ENCODE measurements at regions of chr2 and their contacts with region 1.

Region 1: GRCh38 chr2:158006961-158007719 is 94.5 kb upstream of the UPP2 start:
- DNase-seq: no peak
- H3K4me3 Mint-ChIP-seq: no peak overlapping the region
- H3K27ac Mint-ChIP-seq: no peak overlapping the region
- H3K4me1 Mint-ChIP-seq: peaks cover 6% of the 10 kb centered on the region
- H3K27me3 Mint-ChIP-seq: no peaks in the 10 kb centered on the region
- CTCF ChIP-seq: no peak

Region 2: DNA sequence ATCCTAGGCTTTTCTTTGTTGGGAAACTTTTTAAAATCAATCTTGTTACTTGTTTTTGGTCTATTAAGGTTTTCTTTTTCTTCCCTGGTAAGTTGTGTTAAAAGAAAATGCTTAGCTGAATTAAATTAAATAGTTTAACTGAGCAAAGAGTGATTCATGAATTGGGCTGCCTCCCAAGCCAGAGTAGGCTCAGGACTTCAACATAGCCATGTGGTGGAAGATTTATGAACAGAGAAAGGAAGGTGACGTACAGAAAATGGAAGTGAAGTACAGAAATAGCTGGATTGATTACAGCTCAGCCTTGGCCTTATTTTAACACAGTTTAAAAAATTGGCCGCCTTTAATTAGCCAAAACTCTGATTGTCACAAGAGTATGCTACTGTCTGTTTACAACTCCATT is 777.6 kb before region 1 on chr2:
- CTCF ChIA-PET with region 1: no interaction called
- POLR2A ChIA-PET with region 1: no interaction called
- intact Hi-C with region 1: no loop called
- DNase-seq: no peak
- H3K4me3 Mint-ChIP-seq: no peak overlapping the region
- H3K27ac Mint-ChIP-seq: peak overlapping the region; percentile 11
- H3K4me1 Mint-ChIP-seq: peaks cover 22% of the 10 kb centered on the region
- H3K27me3 Mint-ChIP-seq: no peaks in the 10 kb centered on the region
- CTCF ChIP-seq: no peak

Region 3: GRCh38 chr2:157497638-157498314 is 509.4 kb before region 1 on chr2:
- CTCF ChIA-PET with region 1: interaction called, 6 read pairs
- POLR2A ChIA-PET with region 1: no interaction called
- intact Hi-C with region 1: loop called (anchors 1 kb)
- DNase-seq: peak; percentile 54
- H3K4me3 Mint-ChIP-seq: no peak overlapping the region
- H3K27ac Mint-ChIP-seq: no peak overlapping the region
- H3K4me1 Mint-ChIP-seq: no peaks in the 10 kb centered on the region
- H3K27me3 Mint-ChIP-seq: no peaks in the 10 kb centered on the region
- CTCF ChIP-seq: peak; percentile 63

Region 4: GRCh38 chr2:157777427-157777826 is 229.7 kb before region 1 on chr2:
- CTCF ChIA-PET with region 1: interaction called, 44 read pairs
- POLR2A ChIA-PET with region 1: no interaction called
- intact Hi-C with region 1: loop called (anchors 1 kb)
- DNase-seq: peak; percentile 58
- H3K4me3 Mint-ChIP-seq: no peak overlapping the region
- H3K27ac Mint-ChIP-seq: no peak overlapping the region
- H3K4me1 Mint-ChIP-seq: no peaks in the 10 kb centered on the region
- H3K27me3 Mint-ChIP-seq: no peaks in the 10 kb centered on the region
- CTCF ChIP-seq: peak; percentile 54

Region 5: DNA sequence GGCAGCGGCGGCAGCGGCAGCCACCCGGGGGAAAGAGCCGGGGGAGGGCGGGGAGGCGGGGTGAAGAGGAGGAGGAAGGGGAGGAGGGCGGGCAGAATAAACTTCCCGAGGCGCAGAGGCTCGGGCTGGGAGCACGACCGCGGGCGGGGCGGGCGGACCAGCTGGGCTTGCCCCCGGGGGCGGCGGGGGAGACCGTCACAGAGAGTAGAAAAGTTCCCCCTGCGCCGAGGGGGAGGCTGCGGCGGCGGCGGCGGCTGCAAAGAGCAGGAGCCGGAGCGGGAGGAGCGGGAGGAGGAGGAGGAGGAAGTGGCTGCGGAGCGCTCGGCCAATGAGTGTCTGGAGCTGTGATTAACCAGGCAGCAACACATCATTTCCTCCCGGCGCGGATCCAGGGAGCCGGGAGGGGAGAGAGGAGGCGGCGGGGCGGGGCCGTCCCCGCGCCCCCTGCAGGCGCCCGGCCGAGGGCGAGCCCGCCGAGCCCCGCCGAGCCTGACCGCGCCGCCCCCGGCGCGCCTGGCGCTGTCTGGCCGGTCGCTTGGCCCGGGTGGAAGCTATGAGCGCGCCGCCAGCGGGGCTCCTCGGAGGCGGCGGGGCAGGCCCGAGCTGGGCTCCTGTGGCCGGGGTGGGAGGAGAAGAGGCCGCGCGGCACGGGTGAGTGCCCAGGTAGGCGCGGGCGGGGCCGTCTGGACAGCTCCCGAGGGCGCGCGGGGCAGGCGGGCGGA is 130.9 kb before region 1 on chr2 and contains the start of gene ACVR1:
- CTCF ChIA-PET with region 1: interaction called, 9 read pairs
- POLR2A ChIA-PET with region 1: interaction called, 7 read pairs
- intact Hi-C with region 1: loop called (anchors 5 kb)
- DNase-seq: peak; percentile 99
- H3K4me3 Mint-ChIP-seq: peak within 1 kb of the TSS; percentile 83
- H3K27ac Mint-ChIP-seq: peak within 1 kb of the TSS; percentile 32
- H3K4me1 Mint-ChIP-seq: peaks cover 11% of the 10 kb centered on the region
- H3K27me3 Mint-ChIP-seq: no peaks in the 10 kb centered on the region
- CTCF ChIP-seq: peak; percentile 24
- total RNA-seq, gene ACVR1: 26.4 and 41.4 TPM in 2 replicates

Region 6: GRCh38 chr2:158024288-158024898 is 17.3 kb after region 1 on chr2:
- CTCF ChIA-PET with region 1: interaction called, 12 read pairs
- POLR2A ChIA-PET with region 1: no interaction called
- intact Hi-C with region 1: no loop called
- DNase-seq: peak; percentile 64
- H3K4me3 Mint-ChIP-seq: no peak overlapping the region
- H3K27ac Mint-ChIP-seq: no peak overlapping the region
- H3K4me1 Mint-ChIP-seq: no peaks in the 10 kb centered on the region
- H3K27me3 Mint-ChIP-seq: no peaks in the 10 kb centered on the region
- CTCF ChIP-seq: peak; percentile 73